ENCODE measurements at regions of chr18 and their contacts with region 1.

Region 1: DNA sequence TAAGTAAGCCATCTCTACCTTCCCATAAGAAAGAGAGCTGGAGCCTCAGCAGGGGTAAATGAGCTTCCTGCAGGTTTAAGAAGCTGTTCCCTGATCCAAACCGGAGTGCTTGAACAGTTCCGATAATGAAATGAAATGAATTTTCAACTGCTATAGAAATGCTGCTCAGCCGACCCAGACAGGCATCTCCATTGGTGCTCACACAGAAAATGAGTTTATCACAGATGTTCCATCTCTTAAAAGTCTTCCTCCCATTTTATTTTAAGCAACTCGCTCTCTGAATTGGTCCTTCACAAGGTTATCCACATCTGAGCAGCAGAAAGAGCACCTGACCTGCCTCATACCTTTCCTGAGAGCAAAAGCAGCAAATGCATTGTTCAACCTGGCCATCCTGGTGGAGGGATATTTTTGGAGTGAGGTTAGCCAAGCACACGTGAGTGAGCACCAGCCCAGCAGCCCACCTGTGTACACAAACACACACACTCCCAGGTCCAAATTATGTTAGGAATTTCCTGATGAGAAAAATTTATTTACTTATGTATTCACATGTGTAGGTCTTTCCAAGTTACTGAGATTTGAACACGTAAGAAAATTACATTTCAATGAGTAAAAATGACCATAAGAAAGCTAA is 42.2 kb upstream of the CCDC68 start:
- DNase-seq: peak; percentile 78
- ATAC-seq: peak; percentile 77
- H3K4me3 ChIP-seq: no peak overlapping the region
- H3K27ac ChIP-seq: peak overlapping the region; percentile 49
- H3K4me1 ChIP-seq: peaks cover 21% of the 10 kb centered on the region
- H3K27me3 ChIP-seq: no peaks in the 10 kb centered on the region
- CTCF ChIP-seq: no peak

Region 2: GRCh38 chr18:55096261-55096951 is 94.9 kb after region 1 on chr18:
- CTCF ChIA-PET with region 1: interaction called, 8 read pairs
- POLR2A ChIA-PET with region 1: no interaction called
- intact Hi-C with region 1: loop called (anchors 5 kb)
- DNase-seq: peak; percentile 72
- ATAC-seq: peak; percentile 83
- H3K4me3 ChIP-seq: no peak overlapping the region
- H3K27ac ChIP-seq: no peak overlapping the region
- H3K4me1 ChIP-seq: peaks cover 15% of the 10 kb centered on the region
- H3K27me3 ChIP-seq: no peaks in the 10 kb centered on the region
- CTCF ChIP-seq: peak; percentile 68